Caco-2 (cell line): ENCODE measurements at regions of chr6 and their contacts with region 1.

Region 1: DNA sequence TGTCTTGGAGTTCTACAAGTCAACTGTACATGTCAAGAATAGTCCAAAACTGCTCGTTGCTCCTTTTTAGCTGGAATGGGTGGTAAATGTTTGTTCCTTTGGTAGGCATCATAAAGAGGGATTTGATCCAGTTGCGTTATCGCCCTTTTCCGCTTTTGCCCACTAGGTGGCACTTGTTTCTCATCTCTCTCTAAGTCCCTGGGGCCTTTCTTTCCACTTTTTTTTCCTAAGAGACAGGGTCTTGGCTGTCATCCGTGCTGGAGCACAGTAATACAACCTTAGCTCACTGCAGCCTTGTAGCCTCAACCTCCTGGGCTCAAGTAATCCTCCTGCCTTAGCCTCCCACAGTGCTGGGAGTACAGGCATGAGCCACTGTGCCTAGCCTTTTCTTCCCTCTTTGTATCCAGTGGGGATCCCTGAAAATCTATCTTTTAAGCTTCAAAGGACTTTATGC is 20.7 kb downstream of the GTPBP2 start:
- DNase-seq: peak; percentile 57 to 72
- H3K4me3 ChIP-seq: no peak overlapping the region
- H3K4me3 Mint-ChIP-seq: no peak overlapping the region
- H3K27ac Mint-ChIP-seq: no peak overlapping the region
- H3K4me1 ChIP-seq: peaks cover 5% of the 10 kb centered on the region
- H3K4me1 Mint-ChIP-seq: peaks cover 9% of the 10 kb centered on the region
- H3K27me3 ChIP-seq: no peaks in the 10 kb centered on the region
- H3K27me3 Mint-ChIP-seq: no peaks in the 10 kb centered on the region
- CTCF ChIP-seq: peak; percentile 51 to 78

Region 2: GRCh38 chr6:43667245-43668150 is 59.2 kb after region 1 on chr6:
- CTCF ChIA-PET with region 1: interaction called, 3 read pairs
- POLR2A ChIA-PET with region 1: no interaction called
- intact Hi-C with region 1: loop called (anchors 5 kb)
- DNase-seq: peak; percentile 84 to 91
- H3K4me3 ChIP-seq: 0 out of 2 replicates have a peak overlapping the region, but pooled peaks have one; percentile 4
- H3K4me3 Mint-ChIP-seq: peak overlapping the region; percentile 56
- H3K27ac Mint-ChIP-seq: peak overlapping the region; percentile 73
- H3K4me1 ChIP-seq: peaks cover 9% of the 10 kb centered on the region
- H3K4me1 Mint-ChIP-seq: no peaks in the 10 kb centered on the region
- H3K27me3 ChIP-seq: no peaks in the 10 kb centered on the region
- H3K27me3 Mint-ChIP-seq: no peaks in the 10 kb centered on the region
- CTCF ChIP-seq: peak; percentile 93 to 94

Region 3: DNA sequence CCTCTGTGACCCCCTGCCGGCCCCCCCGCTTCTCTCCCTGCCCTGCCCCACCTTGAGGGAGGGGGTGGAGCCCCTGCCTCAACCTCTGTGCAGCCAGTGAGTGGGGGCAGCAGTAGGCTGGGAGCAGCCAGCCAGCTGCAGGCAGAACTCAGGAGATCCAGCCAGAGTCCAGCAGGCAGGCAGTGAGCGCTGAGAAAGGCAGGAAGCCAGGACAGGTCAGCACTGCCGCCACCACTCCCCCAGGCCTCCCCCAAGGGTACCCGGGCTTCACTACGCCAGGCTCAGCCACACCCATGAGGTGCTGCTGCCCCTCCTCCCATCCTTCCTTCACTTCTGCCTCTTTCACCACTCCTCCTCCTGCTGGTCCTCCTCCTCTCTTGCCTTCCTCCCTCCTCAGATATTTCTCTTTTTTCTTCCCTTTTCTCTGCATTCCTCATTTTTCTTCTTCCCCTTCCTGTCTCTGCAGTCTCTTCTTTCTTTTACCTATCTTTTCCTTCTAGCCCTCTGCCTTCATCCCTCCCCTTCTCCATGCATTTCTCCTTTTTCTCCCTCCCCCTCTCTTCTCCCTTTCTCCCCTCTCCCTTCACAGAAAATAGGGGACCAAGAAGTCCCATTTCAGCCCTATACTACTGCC is 530.5 kb after region 1 on chr6:
- CTCF ChIA-PET with region 1: no interaction called
- POLR2A ChIA-PET with region 1: no interaction called
- intact Hi-C with region 1: no loop called
- DNase-seq: no peak
- H3K4me3 ChIP-seq: no peak overlapping the region
- H3K4me3 Mint-ChIP-seq: no peak overlapping the region
- H3K27ac Mint-ChIP-seq: no peak overlapping the region
- H3K4me1 ChIP-seq: peaks cover 3% of the 10 kb centered on the region
- H3K4me1 Mint-ChIP-seq: peaks cover 8% of the 10 kb centered on the region
- H3K27me3 ChIP-seq: no peaks in the 10 kb centered on the region
- H3K27me3 Mint-ChIP-seq: no peaks in the 10 kb centered on the region
- CTCF ChIP-seq: no peak